SK-N-SH (cell line): ENCODE measurements at regions of chr2 and their contacts with region 1.

Region 1: DNA sequence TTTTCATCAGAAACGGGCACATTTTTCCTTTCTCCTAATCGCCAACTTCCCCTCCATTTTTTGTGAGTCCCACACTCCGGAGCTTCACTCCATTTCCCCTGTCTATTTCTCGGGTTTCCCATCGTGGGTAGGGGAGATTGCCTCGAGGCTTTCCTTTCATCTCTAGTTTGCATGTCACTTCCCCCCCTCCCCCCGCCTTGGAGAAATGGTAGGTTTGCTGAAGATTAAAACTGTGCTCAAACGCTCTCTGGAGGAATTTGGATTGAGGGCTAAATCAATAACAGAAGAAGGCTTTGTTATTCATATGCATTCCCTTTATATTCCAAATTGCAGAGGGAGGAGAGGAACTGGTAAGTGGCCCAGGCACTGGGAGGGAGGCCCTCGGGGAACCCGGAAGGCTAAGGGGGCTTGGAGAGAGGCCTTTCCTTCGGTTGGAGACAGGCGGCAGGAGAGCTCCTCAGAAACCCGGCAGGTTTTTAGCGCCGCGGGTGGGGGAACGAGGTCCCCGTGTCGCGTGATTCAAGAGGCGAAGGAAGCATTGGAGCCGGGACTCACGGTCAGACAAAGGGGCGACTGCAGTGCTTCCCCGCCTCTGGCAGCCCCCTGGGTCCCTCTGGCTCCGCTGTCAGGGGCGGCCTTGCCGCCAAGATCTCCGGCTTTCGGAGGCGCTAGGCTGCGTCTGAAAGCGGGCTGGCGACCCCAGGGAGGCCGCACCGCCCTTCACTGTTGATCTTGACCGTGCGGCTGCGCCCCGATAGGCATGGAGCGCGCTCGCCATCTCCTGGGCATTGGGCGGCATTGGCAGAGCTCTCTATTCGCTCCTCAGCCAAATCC is 2.4 kb upstream of the HOXD12 start:
- DNase-seq: peak; percentile 92
- H3K4me3 ChIP-seq: peak overlapping the region; percentile 48 to 59
- H3K27ac ChIP-seq: no peak overlapping the region
- H3K4me1 ChIP-seq: peaks cover 0 to 25% of the 10 kb centered on the region in 2 experiments; a peak in 2 of 4 replicates
- H3K27me3 ChIP-seq: peaks cover 94% of the 10 kb centered on the region
- CTCF ChIP-seq: peak; percentile 80
- EP300 ChIP-seq: no peak
- RAD21 ChIP-seq: peak; percentile 85

Region 2: GRCh38 chr2:175030380-175031271 is 1066.6 kb before region 1 on chr2:
- CTCF ChIA-PET with region 1: interaction called, 10 read pairs
- POLR2A ChIA-PET with region 1: no interaction called
- DNase-seq: peak; percentile 33
- H3K4me3 ChIP-seq: no peak overlapping the region; a peak in 1 of 4 replicates
- H3K27ac ChIP-seq: no peak overlapping the region
- H3K4me1 ChIP-seq: no peaks in the 10 kb centered on the region
- H3K27me3 ChIP-seq: no peaks in the 10 kb centered on the region
- CTCF ChIP-seq: peak; percentile 50
- EP300 ChIP-seq: no peak
- RAD21 ChIP-seq: peak; percentile 75

Region 3: GRCh38 chr2:175251425-175252041 is 845.7 kb before region 1 on chr2:
- CTCF ChIA-PET with region 1: interaction called, 68 read pairs
- POLR2A ChIA-PET with region 1: no interaction called
- DNase-seq: peak; percentile 40
- H3K4me3 ChIP-seq: no peak overlapping the region; a peak in 1 of 4 replicates
- H3K27ac ChIP-seq: no peak overlapping the region
- H3K4me1 ChIP-seq: no peaks in the 10 kb centered on the region
- H3K27me3 ChIP-seq: no peaks in the 10 kb centered on the region
- CTCF ChIP-seq: peak; percentile 86
- EP300 ChIP-seq: no peak
- RAD21 ChIP-seq: peak; percentile 69

Region 4: DNA sequence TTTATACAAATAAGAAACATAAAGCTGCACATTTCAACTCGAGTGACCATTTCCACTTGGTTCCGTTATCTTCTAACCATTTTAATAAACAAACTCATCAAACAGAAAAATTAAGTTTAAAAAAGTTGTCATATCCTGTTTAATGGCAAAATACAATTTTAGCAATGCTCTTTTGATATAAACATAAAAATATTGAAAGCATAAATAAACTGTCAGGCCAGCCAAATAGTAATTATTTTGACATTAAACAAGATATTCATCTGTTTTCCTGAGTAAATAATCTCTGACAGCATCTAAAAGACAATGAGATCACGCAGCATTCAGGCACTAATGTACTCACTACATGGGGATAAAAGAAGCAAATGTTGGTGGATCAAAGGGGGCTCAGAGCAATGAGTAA is 770.4 kb before region 1 on chr2:
- CTCF ChIA-PET with region 1: interaction called, 15 read pairs
- POLR2A ChIA-PET with region 1: no interaction called
- DNase-seq: no peak
- H3K4me3 ChIP-seq: no peak overlapping the region
- H3K27ac ChIP-seq: no peak overlapping the region
- H3K4me1 ChIP-seq: no peaks in the 10 kb centered on the region
- H3K27me3 ChIP-seq: no peaks in the 10 kb centered on the region
- CTCF ChIP-seq: no peak
- EP300 ChIP-seq: no peak
- RAD21 ChIP-seq: no peak

Region 5: DNA sequence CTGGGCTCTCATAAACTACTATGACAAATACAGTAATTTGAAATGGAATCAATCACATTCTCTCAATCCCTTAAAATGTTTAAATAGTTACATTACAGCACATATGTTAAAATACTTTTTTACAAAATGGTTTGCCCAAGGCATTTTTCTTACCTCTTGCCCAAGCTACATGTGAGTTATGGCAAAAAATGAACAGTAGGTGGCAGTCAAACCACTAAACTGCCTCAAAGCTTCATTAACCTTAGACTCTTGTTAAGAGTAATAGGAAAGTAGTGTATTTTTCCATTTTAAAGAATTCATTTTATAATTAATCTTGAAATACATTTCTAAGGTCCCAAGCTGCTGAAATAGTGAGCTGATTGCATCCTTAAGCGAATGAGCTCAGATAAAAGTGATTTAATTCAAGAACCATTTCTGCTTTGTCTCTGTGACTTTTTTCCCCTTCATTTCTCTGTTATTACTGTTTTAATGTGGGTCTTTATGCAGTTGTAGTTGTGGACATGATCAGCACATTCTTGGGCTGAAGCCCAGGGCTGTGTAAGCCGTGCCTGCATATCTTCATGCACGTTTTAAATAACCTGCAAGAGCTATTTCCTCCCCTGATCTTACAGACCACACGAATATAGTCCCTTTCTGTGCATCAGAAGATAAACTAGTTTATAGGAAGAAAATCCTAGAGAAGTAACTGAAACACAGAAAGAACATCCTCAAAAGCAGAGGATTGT is 406.9 kb before region 1 on chr2:
- CTCF ChIA-PET with region 1: interaction called, 53 read pairs
- POLR2A ChIA-PET with region 1: no interaction called
- DNase-seq: peak; percentile 24
- H3K4me3 ChIP-seq: no peak overlapping the region
- H3K27ac ChIP-seq: no peak overlapping the region
- H3K4me1 ChIP-seq: peaks cover 0 to 15% of the 10 kb centered on the region in 2 experiments; a peak in 2 of 4 replicates
- H3K27me3 ChIP-seq: peaks cover 8% of the 10 kb centered on the region; the same call in 1 of the 2 replicates
- CTCF ChIP-seq: peak; percentile 83
- EP300 ChIP-seq: no peak
- RAD21 ChIP-seq: peak; percentile 90

Region 6: DNA sequence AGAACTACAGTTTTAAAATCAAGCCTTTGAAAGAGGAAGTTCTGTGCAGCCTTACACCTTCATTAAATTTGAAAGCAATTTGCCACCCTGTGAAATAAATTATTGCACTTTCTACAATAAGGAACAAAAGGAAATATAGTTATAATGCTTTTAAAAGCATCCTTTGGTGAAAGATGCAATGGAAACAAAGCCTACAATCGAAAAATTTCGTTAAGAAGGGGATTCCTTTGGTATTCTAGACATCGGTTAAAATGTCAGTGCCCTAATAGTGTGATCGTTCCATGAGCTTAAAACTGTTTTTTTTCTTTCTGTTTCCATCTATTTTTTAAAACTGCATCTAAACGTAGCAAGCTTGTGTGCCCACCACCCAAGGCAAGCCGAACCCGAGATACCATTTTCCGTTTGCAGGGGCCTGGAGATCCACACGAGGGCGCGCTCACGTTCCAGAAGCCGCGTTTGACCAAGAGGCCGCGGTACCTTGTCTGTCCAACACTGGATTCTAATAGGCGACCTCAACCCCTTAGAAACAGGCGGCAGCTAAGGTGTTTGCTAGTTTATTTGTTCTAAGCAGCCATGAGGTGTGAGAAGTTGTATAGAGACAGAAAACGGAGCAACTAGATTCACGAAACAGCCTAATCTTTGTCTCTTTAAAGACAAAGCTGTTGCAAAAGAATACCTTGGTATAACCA is 13.9 kb after region 1 on chr2:
- CTCF ChIA-PET with region 1: interaction called, 264 read pairs
- POLR2A ChIA-PET with region 1: no interaction called
- DNase-seq: peak; percentile 88
- H3K4me3 ChIP-seq: peak overlapping the region in 1 of 2 experiments; percentile 19; a peak in 1 of 4 replicates
- H3K27ac ChIP-seq: no peak overlapping the region
- H3K4me1 ChIP-seq: peaks cover 0 to 4% of the 10 kb centered on the region in 2 experiments; a peak in 2 of 4 replicates
- H3K27me3 ChIP-seq: peaks cover 70% of the 10 kb centered on the region
- CTCF ChIP-seq: peak; percentile 90
- EP300 ChIP-seq: no peak
- RAD21 ChIP-seq: peak; percentile 65